ENCODE measurements at regions of chr19 and their contacts with region 1.

Region 1: DNA sequence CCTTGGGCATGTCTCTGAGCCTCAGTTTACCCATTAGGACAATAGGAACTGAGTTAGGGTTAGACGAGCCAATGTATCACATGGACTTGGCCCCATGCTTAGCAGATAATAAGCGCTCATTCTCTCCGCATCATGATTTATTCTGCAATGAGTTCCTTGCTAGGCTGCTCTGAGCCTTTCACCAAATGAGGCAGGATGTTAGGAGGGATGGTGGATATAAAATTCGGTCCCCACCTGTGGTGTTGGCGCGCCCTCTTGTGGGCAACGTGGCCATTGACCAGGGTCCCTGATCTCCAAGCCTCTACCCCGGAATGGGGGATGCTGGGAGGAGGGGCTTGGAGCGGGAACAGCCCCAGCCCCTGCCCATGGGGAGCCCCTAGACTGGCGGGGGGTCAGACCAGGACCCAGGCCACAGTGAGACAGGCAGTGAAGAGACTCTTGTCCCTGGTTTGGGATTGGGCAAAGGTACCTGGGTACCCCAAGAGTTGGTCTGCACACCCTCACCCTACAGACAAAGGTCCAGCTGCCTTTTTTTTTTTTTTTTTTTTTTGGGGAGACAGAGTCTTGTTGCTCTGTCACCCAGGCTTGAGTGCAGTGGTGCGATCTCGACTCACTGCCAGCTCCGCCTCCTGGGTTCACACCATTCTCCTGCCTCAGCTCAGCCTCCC is 43.9 kb downstream of the CERS4 start:
- DNase-seq: peak; percentile 67 to 73 (median 68)
- H3K4me3 ChIP-seq: no peak overlapping the region
- H3K4me3 Mint-ChIP-seq: no peak overlapping the region
- H3K27ac ChIP-seq: no peak overlapping the region
- H3K27ac Mint-ChIP-seq: no peak overlapping the region
- H3K4me1 ChIP-seq: no peaks in the 10 kb centered on the region
- H3K4me1 Mint-ChIP-seq: no peaks in the 10 kb centered on the region
- H3K27me3 ChIP-seq: no peaks in the 10 kb centered on the region
- H3K27me3 Mint-ChIP-seq: peaks cover 13 to 21% (median 15%) of the 10 kb centered on the region in 3 donors
- CTCF ChIP-seq: peak; percentile 98

Region 2: DNA sequence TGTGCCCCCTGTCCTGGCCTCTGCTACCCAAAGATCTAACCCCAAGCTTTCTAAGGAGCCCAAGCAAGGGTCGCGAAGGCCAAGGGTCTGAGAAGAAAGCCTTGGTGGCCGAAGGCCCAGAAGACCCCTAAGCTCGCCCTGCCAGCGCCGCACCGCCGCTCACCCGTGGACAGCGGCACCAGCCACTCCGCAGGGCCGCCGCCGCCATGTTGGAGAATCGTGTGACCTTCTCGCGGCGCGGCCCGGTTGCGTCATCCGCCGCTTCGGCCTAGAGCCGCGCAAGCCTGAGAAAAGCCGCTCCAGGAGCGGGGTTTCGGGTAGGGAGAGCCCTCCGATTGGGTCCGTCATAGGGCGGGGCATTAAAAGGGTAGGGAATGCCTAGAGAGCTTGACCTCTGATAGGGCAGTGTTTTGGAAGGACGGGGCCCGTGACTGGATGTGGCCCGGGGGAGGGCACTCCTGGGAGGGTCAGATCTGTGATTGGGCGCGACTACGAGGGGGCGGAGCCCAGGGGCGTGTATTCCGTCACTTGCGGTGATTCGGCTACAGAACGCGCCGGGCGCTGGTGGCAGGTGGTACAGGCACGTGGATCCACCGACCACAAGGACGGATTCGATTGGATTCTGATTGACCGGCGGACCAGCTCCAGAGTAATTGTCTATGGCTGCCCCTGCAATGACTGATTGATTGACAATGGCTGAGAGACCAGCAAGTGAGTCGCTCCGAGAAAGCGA is 309.4 kb before region 1 on chr19 and contains the start of gene TIMM44:
- intact Hi-C with region 1: loop called (anchors 10 kb)
- DNase-seq: peak; percentile 99 to 100 (median 99)
- H3K4me3 ChIP-seq: peak within 1 kb of the TSS; percentile 44 to 84 (median 84)
- H3K4me3 Mint-ChIP-seq: peak within 1 kb of the TSS; percentile 87 to 92
- H3K27ac ChIP-seq: peak within 1 kb of the TSS; percentile 90 to 91
- H3K27ac Mint-ChIP-seq: peak within 1 kb of the TSS; percentile 94 to 98 (median 97)
- H3K4me1 ChIP-seq: peaks cover 8 to 21% of the 10 kb centered on the region in 2 donors
- H3K4me1 Mint-ChIP-seq: peaks cover 18% of the 10 kb centered on the region
- H3K27me3 ChIP-seq: no peaks in the 10 kb centered on the region
- H3K27me3 Mint-ChIP-seq: peaks cover 0 to 3% (median 0%) of the 10 kb centered on the region in 3 donors
- CTCF ChIP-seq: no peak
- polyA plus RNA-seq, gene TIMM44: 9.5 to 33.2 (median 10.4) TPM

Region 3: GRCh38 chr19:8017808-8018207 is 235.2 kb before region 1 on chr19:
- intact Hi-C with region 1: loop called in 1 of 2 experiments (anchors 10 kb)
- DNase-seq: peak; percentile 26 to 37 (median 36)
- H3K4me3 ChIP-seq: no peak overlapping the region
- H3K4me3 Mint-ChIP-seq: no peak overlapping the region
- H3K27ac ChIP-seq: no peak overlapping the region
- H3K27ac Mint-ChIP-seq: peak overlapping the region in 2 of 7 donors; percentile 2 to 37
- H3K4me1 ChIP-seq: no peaks in the 10 kb centered on the region
- H3K4me1 Mint-ChIP-seq: peaks cover 7% of the 10 kb centered on the region
- H3K27me3 ChIP-seq: no peaks in the 10 kb centered on the region
- H3K27me3 Mint-ChIP-seq: peaks cover 0 to 4% (median 4%) of the 10 kb centered on the region in 3 donors
- CTCF ChIP-seq: peak; percentile 55

Measured in CD14-positive monocyte (primary cell).